Caco-2 (cell line): ENCODE measurements at regions of chr22 and their contacts with region 1.

Region 1: GRCh38 chr22:38257650-38258250 is 15.1 kb downstream of the TMEM184B start:
- DNase-seq: peak in 1 of 2 experiments; percentile 43
- H3K4me3 ChIP-seq: no peak overlapping the region
- H3K4me3 Mint-ChIP-seq: no peak overlapping the region
- H3K27ac Mint-ChIP-seq: no peak overlapping the region
- H3K4me1 ChIP-seq: no peaks in the 10 kb centered on the region
- H3K4me1 Mint-ChIP-seq: peaks cover 7% of the 10 kb centered on the region
- H3K27me3 ChIP-seq: no peaks in the 10 kb centered on the region
- H3K27me3 Mint-ChIP-seq: no peaks in the 10 kb centered on the region
- CTCF ChIP-seq: peak in 1 of 2 experiments; percentile 42

Region 2: DNA sequence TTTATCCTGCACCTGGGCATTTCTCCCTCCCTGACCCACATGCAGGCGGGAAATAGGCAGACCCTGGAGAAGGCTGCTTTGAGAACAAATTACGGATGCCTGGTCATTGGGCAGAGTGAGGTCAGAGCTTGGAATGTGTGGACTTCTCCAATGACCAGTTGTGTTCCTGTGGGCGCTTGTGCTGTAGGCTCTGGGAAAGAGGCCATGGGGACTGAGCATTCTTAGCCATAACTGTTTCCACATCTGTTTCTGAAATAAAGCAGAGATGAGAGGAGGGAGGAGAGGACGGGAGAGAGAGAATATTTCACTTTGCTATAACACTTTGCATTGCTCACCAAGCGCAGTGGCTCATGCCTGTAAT is 26.3 kb after region 1 on chr22:
- CTCF ChIA-PET with region 1: interaction called, 10 read pairs
- POLR2A ChIA-PET with region 1: interaction called, 3 read pairs
- intact Hi-C with region 1: no loop called
- DNase-seq: no peak
- H3K4me3 ChIP-seq: no peak overlapping the region
- H3K4me3 Mint-ChIP-seq: peak overlapping the region; percentile 60
- H3K27ac Mint-ChIP-seq: peak overlapping the region; percentile 88
- H3K4me1 ChIP-seq: peaks cover 37% of the 10 kb centered on the region
- H3K4me1 Mint-ChIP-seq: peaks cover 22% of the 10 kb centered on the region
- H3K27me3 ChIP-seq: no peaks in the 10 kb centered on the region
- H3K27me3 Mint-ChIP-seq: no peaks in the 10 kb centered on the region
- CTCF ChIP-seq: no peak

Region 3: DNA sequence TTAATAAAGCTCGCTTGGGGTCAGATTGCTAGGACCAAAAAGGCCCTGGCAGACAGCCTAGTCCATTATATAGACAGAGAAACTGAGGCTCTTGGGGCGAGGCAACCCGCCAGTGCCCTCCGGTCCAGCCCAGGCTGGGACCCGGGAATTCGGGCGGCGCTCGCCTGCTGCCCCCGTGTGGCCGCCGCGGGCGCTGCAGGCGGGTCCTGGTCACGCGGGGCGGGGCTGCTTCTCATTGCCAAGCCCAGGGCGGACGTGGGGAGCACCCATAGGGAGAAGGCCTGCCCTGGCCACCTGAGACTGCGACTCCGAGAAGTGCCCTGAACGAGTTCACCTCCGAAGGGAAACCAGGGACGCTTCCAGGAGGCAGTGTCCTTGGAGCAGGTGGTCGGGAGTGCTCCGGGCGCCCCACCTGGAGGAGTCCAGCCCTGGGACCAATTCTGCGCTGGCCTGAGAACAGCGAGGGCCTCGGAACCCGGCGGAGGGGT is 95.4 kb after region 1 on chr22:
- CTCF ChIA-PET with region 1: no interaction called
- POLR2A ChIA-PET with region 1: no interaction called
- intact Hi-C with region 1: loop called (anchors 2 kb)
- DNase-seq: peak in 1 of 2 experiments; percentile 83
- H3K4me3 ChIP-seq: no peak overlapping the region
- H3K4me3 Mint-ChIP-seq: no peak overlapping the region
- H3K27ac Mint-ChIP-seq: no peak overlapping the region
- H3K4me1 ChIP-seq: 0 out of 2 replicates have a peak, but pooled peaks cover 5% of the 10 kb centered on the region
- H3K4me1 Mint-ChIP-seq: no peaks in the 10 kb centered on the region
- H3K27me3 ChIP-seq: no peaks in the 10 kb centered on the region
- H3K27me3 Mint-ChIP-seq: no peaks in the 10 kb centered on the region
- CTCF ChIP-seq: peak; percentile 73 to 94